ENCODE measurements at regions of chr11 and their contacts with region 1.

Region 1: GRCh38 chr11:47407746-47408590 is at the start of gene SLC39A13:
- DNase-seq: peak; percentile 98
- total RNA-seq, gene SLC39A13: 72.2 TPM

Region 2: GRCh38 chr11:46977038-46977813 is 430.7 kb before region 1 on chr11:
- intact Hi-C with region 1: no loop called
- DNase-seq: no peak

Region 3: GRCh38 chr11:47426061-47426956 is 18.3 kb after region 1 on chr11 and contains the start of gene PSMC3:
- intact Hi-C with region 1: loop called (anchors 2 kb)
- DNase-seq: peak; percentile 99
- total RNA-seq, gene PSMC3: 132 TPM